ENCODE measurements at regions of chr9 and their contacts with region 1.

Region 1: GRCh38 chr9:136644598-136645351 is 17.9 kb upstream of the EGFL7 start:
- DNase-seq: peak; percentile 85
- H3K4me3 ChIP-seq: peak overlapping the region in 2 of 4 donors; percentile 23 to 32
- H3K27ac ChIP-seq: peak overlapping the region; percentile 34 to 66 (median 56)
- H3K4me1 ChIP-seq: peaks cover 0 to 17% (median 10%) of the 10 kb centered on the region in 4 donors
- H3K27me3 ChIP-seq: peaks cover 12 to 71% (median 47%) of the 10 kb centered on the region in 3 donors
- CTCF ChIP-seq: peak; percentile 63 to 72 (median 66)
- EP300 ChIP-seq: peak in 1 of 4 donors; percentile 31
- POLR2A ChIP-seq: peak; percentile 24 to 26

Region 2: GRCh38 chr9:136327313-136327974 is 317.3 kb before region 1 on chr9 and contains the start of gene GPSM1:
- intact Hi-C with region 1: loop called (anchors 10 kb)
- DNase-seq: peak; percentile 81
- H3K4me3 ChIP-seq: peak within 1 kb of the TSS; percentile 50 to 84 (median 72)
- H3K27ac ChIP-seq: peak within 1 kb of the TSS; percentile 74 to 79 (median 78)
- H3K4me1 ChIP-seq: peaks cover 0 to 37% (median 28%) of the 10 kb centered on the region in 4 donors
- H3K27me3 ChIP-seq: no peaks in the 10 kb centered on the region
- CTCF ChIP-seq: no peak
- EP300 ChIP-seq: no peak
- POLR2A ChIP-seq: no peak
- total RNA-seq, gene GPSM1: 5.0 to 16.1 (median 12.2) TPM

Measured in sigmoid colon (tissue), 7 donors.